A673 (cell line): ENCODE measurements at regions of chr7 and their contacts with region 1.

Region 1: GRCh38 chr7:19442016-19442785 is 266.6 kb downstream of the POLR1F start:
- DNase-seq: peak; percentile 63
- H3K4me3 ChIP-seq: no peak overlapping the region
- H3K27ac ChIP-seq: no peak overlapping the region
- H3K4me1 ChIP-seq: no peaks in the 10 kb centered on the region
- H3K27me3 ChIP-seq: no peaks in the 10 kb centered on the region
- CTCF ChIP-seq: peak; percentile 65

Region 2: GRCh38 chr7:18693406-18693805 is 748.8 kb before region 1 on chr7:
- CTCF ChIA-PET with region 1: no interaction called
- POLR2A ChIA-PET with region 1: no interaction called
- intact Hi-C with region 1: loop called (anchors 5 kb)
- DNase-seq: peak; percentile 77
- H3K4me3 ChIP-seq: no peak overlapping the region
- H3K27ac ChIP-seq: no peak overlapping the region
- H3K4me1 ChIP-seq: peaks cover 18% of the 10 kb centered on the region
- H3K27me3 ChIP-seq: no peaks in the 10 kb centered on the region
- CTCF ChIP-seq: peak; percentile 75

Region 3: GRCh38 chr7:18948521-18948920 is 493.7 kb before region 1 on chr7:
- CTCF ChIA-PET with region 1: no interaction called
- POLR2A ChIA-PET with region 1: no interaction called
- intact Hi-C with region 1: no loop called
- DNase-seq: no peak
- H3K4me3 ChIP-seq: no peak overlapping the region
- H3K27ac ChIP-seq: no peak overlapping the region
- H3K4me1 ChIP-seq: peaks cover 12% of the 10 kb centered on the region
- H3K27me3 ChIP-seq: no peaks in the 10 kb centered on the region
- CTCF ChIP-seq: no peak